CD4-positive, alpha-beta T cell (primary cell): ENCODE measurements at regions of chr2 and their contacts with region 1.

Region 1: GRCh38 chr2:178112202-178113152 is at the start of gene RBM45:
- DNase-seq: peak; percentile 69 to 91 (median 82)
- ATAC-seq: peak; percentile 91
- H3K4me3 ChIP-seq: peak within 1 kb of the TSS; percentile 85
- H3K4me3 Mint-ChIP-seq: peak within 1 kb of the TSS; percentile 87
- H3K27ac ChIP-seq: peak within 1 kb of the TSS; percentile 52 to 61
- H3K27ac Mint-ChIP-seq: peak within 1 kb of the TSS; percentile 55
- H3K4me1 ChIP-seq: peaks cover 21% of the 10 kb centered on the region
- H3K4me1 Mint-ChIP-seq: peaks cover 47% of the 10 kb centered on the region
- H3K27me3 ChIP-seq: no peaks in the 10 kb centered on the region
- H3K27me3 Mint-ChIP-seq: no peaks in the 10 kb centered on the region
- CTCF ChIP-seq: peak; percentile 95
- total RNA-seq, gene RBM45: 6.9 to 9.5 TPM

Region 2: DNA sequence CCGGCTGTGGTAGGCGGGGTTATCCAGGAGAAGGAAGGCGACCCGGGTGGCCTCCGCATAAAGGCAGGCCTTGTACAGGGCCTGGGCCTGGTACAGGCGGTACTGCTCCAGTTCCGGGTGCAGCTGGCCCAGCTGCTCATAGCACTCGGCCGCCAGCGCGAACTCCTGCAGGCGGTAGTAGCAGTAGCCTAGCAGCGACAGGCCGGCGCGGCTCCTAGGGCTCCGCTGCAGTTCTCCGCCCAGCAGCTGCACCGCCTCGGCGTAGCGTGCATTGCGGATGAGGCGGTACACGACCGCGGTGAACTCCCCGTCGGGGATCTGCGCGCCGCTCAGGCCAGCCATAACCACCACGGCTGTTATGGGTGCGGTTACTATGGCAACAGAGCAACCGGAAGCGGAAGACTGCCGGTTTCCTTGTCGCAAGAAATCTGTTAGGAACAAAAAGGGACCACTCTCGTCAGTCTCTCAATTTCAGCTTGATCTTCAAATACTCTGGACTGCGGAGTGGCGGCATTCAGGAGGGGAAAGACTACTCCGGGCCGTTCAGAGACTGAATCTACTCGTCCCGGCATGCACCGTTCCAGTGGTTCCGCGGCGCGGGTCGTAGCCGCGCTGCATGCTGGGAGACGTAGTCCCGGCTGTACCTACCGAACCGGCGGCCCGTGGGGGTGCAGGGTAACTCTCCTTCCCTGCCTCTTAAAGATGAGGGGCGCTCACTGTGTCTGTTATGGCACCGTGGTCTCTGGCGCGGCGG is 559.9 kb before region 1 on chr2:
- CTCF ChIA-PET with region 1: no interaction called
- POLR2A ChIA-PET with region 1: no interaction called
- intact Hi-C with region 1: loop called in 1 of 2 experiments (anchors 5 kb)
- DNase-seq: peak; percentile 80 to 97 (median 88)
- ATAC-seq: peak; percentile 91
- H3K4me3 ChIP-seq: peak overlapping the region; percentile 71
- H3K4me3 Mint-ChIP-seq: peak overlapping the region; percentile 99
- H3K27ac ChIP-seq: peak overlapping the region; percentile 93 to 99
- H3K27ac Mint-ChIP-seq: peak overlapping the region; percentile 98
- H3K4me1 ChIP-seq: peaks cover 13% of the 10 kb centered on the region
- H3K4me1 Mint-ChIP-seq: peaks cover 17% of the 10 kb centered on the region
- H3K27me3 ChIP-seq: no peaks in the 10 kb centered on the region
- H3K27me3 Mint-ChIP-seq: peaks cover 3% of the 10 kb centered on the region
- CTCF ChIP-seq: no peak

Region 3: GRCh38 chr2:177618255-177619253 is 493.9 kb before region 1 on chr2:
- CTCF ChIA-PET with region 1: no interaction called
- POLR2A ChIA-PET with region 1: no interaction called
- intact Hi-C with region 1: loop called in 1 of 2 experiments (anchors 5 kb)
- DNase-seq: peak; percentile 83 to 96 (median 89)
- ATAC-seq: peak; percentile 89
- H3K4me3 ChIP-seq: peak overlapping the region; percentile 72
- H3K4me3 Mint-ChIP-seq: peak overlapping the region; percentile 96
- H3K27ac ChIP-seq: peak overlapping the region; percentile 89 to 98
- H3K27ac Mint-ChIP-seq: peak overlapping the region; percentile 94
- H3K4me1 ChIP-seq: peaks cover 14% of the 10 kb centered on the region
- H3K4me1 Mint-ChIP-seq: peaks cover 8% of the 10 kb centered on the region
- H3K27me3 ChIP-seq: no peaks in the 10 kb centered on the region
- H3K27me3 Mint-ChIP-seq: peaks cover 12% of the 10 kb centered on the region
- CTCF ChIP-seq: no peak

Region 4: GRCh38 chr2:178128836-178129630 is 16.6 kb after region 1 on chr2:
- CTCF ChIA-PET with region 1: interaction called, 10 read pairs
- POLR2A ChIA-PET with region 1: interaction called, 6 read pairs
- intact Hi-C with region 1: no loop called
- DNase-seq: no peak
- ATAC-seq: no peak
- H3K4me3 ChIP-seq: no peak overlapping the region
- H3K4me3 Mint-ChIP-seq: no peak overlapping the region
- H3K27ac ChIP-seq: no peak overlapping the region
- H3K27ac Mint-ChIP-seq: no peak overlapping the region
- H3K4me1 ChIP-seq: no peaks in the 10 kb centered on the region
- H3K4me1 Mint-ChIP-seq: peaks cover 9% of the 10 kb centered on the region
- H3K27me3 ChIP-seq: no peaks in the 10 kb centered on the region
- H3K27me3 Mint-ChIP-seq: no peaks in the 10 kb centered on the region
- CTCF ChIP-seq: no peak

Region 5: GRCh38 chr2:178208817-178209216 is 96.3 kb after region 1 on chr2:
- CTCF ChIA-PET with region 1: no interaction called
- POLR2A ChIA-PET with region 1: no interaction called
- intact Hi-C with region 1: no loop called
- DNase-seq: no peak
- ATAC-seq: no peak
- H3K4me3 ChIP-seq: no peak overlapping the region
- H3K4me3 Mint-ChIP-seq: no peak overlapping the region
- H3K27ac ChIP-seq: no peak overlapping the region
- H3K27ac Mint-ChIP-seq: no peak overlapping the region
- H3K4me1 ChIP-seq: no peaks in the 10 kb centered on the region
- H3K4me1 Mint-ChIP-seq: no peaks in the 10 kb centered on the region
- H3K27me3 ChIP-seq: peaks cover 0 to 3% of the 10 kb centered on the region in 2 experiments
- H3K27me3 Mint-ChIP-seq: peaks cover 54% of the 10 kb centered on the region
- CTCF ChIP-seq: no peak

Region 6: DNA sequence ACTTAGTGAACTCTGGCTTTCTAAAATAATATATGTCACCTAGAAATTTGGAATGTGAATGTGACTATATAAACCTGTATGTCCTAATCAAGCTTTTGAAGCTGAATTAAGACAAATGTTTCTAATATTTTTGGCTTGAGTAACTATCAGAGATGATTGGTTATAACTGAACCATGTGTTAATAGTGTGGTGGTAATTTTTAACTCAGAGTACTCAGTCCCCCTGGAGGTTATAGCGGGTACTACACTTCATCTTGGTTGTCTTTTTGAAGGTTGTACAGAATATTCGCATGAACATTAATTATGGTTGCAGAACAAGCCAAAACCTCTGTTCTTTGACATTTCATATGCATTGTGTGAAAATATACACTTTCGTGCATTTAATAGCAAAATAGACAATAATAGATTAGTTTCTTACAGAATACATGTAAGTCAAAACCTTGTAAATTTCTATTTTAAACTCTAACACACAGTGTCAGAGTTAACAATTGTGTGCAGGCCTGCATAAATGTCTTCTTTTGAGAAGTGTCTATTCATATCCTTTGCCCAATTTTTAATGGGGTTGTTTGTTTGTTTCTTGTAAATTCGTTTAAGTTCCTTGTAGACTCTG is 167.9 kb after region 1 on chr2:
- CTCF ChIA-PET with region 1: no interaction called
- POLR2A ChIA-PET with region 1: no interaction called
- intact Hi-C with region 1: loop called (anchors 2 to 5 kb)
- DNase-seq: peak in 7 of 14 experiments; percentile 9 to 62 (median 46)
- ATAC-seq: peak; percentile 63
- H3K4me3 ChIP-seq: no peak overlapping the region
- H3K4me3 Mint-ChIP-seq: no peak overlapping the region
- H3K27ac ChIP-seq: no peak overlapping the region
- H3K27ac Mint-ChIP-seq: no peak overlapping the region
- H3K4me1 ChIP-seq: no peaks in the 10 kb centered on the region
- H3K4me1 Mint-ChIP-seq: no peaks in the 10 kb centered on the region
- H3K27me3 ChIP-seq: peaks cover 0 to 2% of the 10 kb centered on the region in 2 experiments
- H3K27me3 Mint-ChIP-seq: peaks cover 22% of the 10 kb centered on the region
- CTCF ChIP-seq: peak; percentile 80

Region 7: GRCh38 chr2:178414266-178415247 is 302.1 kb after region 1 on chr2:
- CTCF ChIA-PET with region 1: interaction called, 3 read pairs
- POLR2A ChIA-PET with region 1: no interaction called
- intact Hi-C with region 1: loop called (anchors 2 to 5 kb)
- DNase-seq: peak; percentile 48 to 89 (median 60)
- ATAC-seq: peak; percentile 64
- H3K4me3 ChIP-seq: peak overlapping the region; percentile 77
- H3K4me3 Mint-ChIP-seq: peak overlapping the region; percentile 91
- H3K27ac ChIP-seq: peak overlapping the region; percentile 65 to 86
- H3K27ac Mint-ChIP-seq: peak overlapping the region; percentile 81
- H3K4me1 ChIP-seq: peaks cover 12% of the 10 kb centered on the region
- H3K4me1 Mint-ChIP-seq: peaks cover 26% of the 10 kb centered on the region
- H3K27me3 ChIP-seq: no peaks in the 10 kb centered on the region
- H3K27me3 Mint-ChIP-seq: no peaks in the 10 kb centered on the region
- CTCF ChIP-seq: peak; percentile 82

Region 8: GRCh38 chr2:180006781-180007579 is 1894.5 kb after region 1 on chr2 and contains the start of gene CWC22:
- CTCF ChIA-PET with region 1: no interaction called
- POLR2A ChIA-PET with region 1: no interaction called
- intact Hi-C with region 1: loop called in 1 of 2 experiments (anchors 2 kb)
- DNase-seq: peak; percentile 72 to 95 (median 78)
- ATAC-seq: peak; percentile 95
- H3K4me3 ChIP-seq: peak within 1 kb of the TSS; percentile 89
- H3K4me3 Mint-ChIP-seq: peak within 1 kb of the TSS; percentile 96
- H3K27ac ChIP-seq: peak within 1 kb of the TSS; percentile 97 to 98
- H3K27ac Mint-ChIP-seq: peak within 1 kb of the TSS; percentile 99
- H3K4me1 ChIP-seq: peaks cover 15% of the 10 kb centered on the region
- H3K4me1 Mint-ChIP-seq: peaks cover 39% of the 10 kb centered on the region
- H3K27me3 ChIP-seq: no peaks in the 10 kb centered on the region
- H3K27me3 Mint-ChIP-seq: no peaks in the 10 kb centered on the region
- CTCF ChIP-seq: no peak
- total RNA-seq, gene CWC22: 11.8 to 12.0 TPM